ENCODE measurements at regions of chr10 and their contacts with region 1.

Region 1: GRCh38 chr10:48900371-48900801 is 39.3 kb downstream of the LRRC18 start:
- DNase-seq: no peak
- ATAC-seq: no peak
- H3K4me3 ChIP-seq: no peak overlapping the region
- H3K27ac ChIP-seq: no peak overlapping the region
- H3K4me1 ChIP-seq: no peaks in the 10 kb centered on the region
- H3K27me3 ChIP-seq: peaks cover 5% of the 10 kb centered on the region; the same call in 1 of the 2 replicates
- CTCF ChIP-seq: no peak

Region 2: GRCh38 chr10:48879451-48879850 is 20.9 kb before region 1 on chr10:
- CTCF ChIA-PET with region 1: no interaction called
- POLR2A ChIA-PET with region 1: no interaction called
- in situ Hi-C with region 1: no loop called
- intact Hi-C with region 1: no loop called
- DNase-seq: no peak
- ATAC-seq: no peak
- H3K4me3 ChIP-seq: no peak overlapping the region
- H3K27ac ChIP-seq: no peak overlapping the region
- H3K4me1 ChIP-seq: no peaks in the 10 kb centered on the region
- H3K27me3 ChIP-seq: no peaks in the 10 kb centered on the region; the same call in 1 of the 2 replicates
- CTCF ChIP-seq: no peak

Region 3: DNA sequence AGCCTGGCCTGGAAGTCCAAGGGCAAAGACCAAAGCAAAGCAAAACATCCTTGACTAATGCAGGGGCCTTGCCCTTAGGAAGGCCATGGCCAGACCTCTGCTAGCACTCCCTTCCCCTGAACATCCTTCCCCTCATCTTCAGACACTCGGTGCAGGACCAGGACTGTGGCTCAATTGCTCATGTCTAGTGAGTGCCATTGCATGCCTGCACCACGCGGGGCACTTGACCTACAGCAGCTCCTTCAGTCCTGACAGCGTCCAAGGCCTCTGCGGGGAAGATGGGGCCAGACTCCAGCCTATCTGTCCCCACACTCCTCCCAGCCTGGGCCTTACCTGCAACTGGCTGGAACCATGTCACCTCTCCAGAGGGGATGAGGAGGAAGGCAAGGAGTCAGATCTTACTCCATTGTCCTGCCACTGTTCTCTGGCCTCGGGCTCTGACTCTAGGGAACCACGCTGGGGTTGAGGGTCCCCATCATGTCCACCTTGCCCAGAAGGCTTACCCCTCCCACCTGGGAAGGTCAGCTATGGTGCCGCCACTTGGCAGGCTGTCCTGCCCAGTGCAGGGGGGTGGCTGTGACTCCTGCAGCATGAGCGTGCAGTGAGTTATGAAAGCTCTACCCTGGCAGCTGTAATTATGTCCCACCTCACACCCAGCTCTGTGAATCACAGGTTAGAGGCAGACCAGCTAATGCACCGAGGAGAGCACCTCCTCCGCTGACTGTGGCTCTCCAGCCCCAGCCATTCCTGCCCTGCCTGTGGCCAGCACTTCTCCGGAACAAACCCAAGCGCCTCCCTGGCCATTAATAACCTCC is 479.4 kb after region 1 on chr10:
- CTCF ChIA-PET with region 1: no interaction called
- POLR2A ChIA-PET with region 1: no interaction called
- in situ Hi-C with region 1: no loop called
- intact Hi-C with region 1: loop called (anchors 10 kb)
- DNase-seq: no peak
- ATAC-seq: peak; percentile 80
- H3K4me3 ChIP-seq: no peak overlapping the region
- H3K27ac ChIP-seq: no peak overlapping the region
- H3K4me1 ChIP-seq: no peaks in the 10 kb centered on the region
- H3K27me3 ChIP-seq: peaks cover 9% of the 10 kb centered on the region
- CTCF ChIP-seq: no peak

Region 4: DNA sequence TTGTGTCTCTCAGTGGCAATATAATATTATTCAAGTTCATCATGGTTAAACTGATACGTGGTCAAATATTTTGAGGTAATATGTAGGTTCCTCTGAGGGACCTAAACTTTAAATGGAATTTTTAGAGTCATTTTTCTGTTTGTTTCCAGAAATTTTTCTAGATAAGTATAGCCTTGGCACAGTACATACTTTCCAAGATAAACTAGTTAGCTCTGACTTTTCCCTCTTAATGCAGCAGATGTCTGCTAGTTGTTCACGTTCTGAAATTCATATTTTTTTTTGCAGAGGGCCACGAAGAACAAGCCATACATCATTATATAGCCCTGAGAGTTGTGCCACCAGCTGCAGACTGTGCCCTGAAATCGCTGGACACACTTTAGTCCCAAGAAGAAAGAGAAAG is 1923.4 kb after region 1 on chr10:
- CTCF ChIA-PET with region 1: no interaction called
- POLR2A ChIA-PET with region 1: no interaction called
- in situ Hi-C with region 1: no loop called
- intact Hi-C with region 1: no loop called
- DNase-seq: no peak
- ATAC-seq: no peak
- H3K4me3 ChIP-seq: no peak overlapping the region
- H3K27ac ChIP-seq: no peak overlapping the region
- H3K4me1 ChIP-seq: no peaks in the 10 kb centered on the region
- H3K27me3 ChIP-seq: peaks cover 19% of the 10 kb centered on the region; the same call in 1 of the 2 replicates
- CTCF ChIP-seq: no peak